CD4-positive, alpha-beta T cell (primary cell): ENCODE measurements at regions of chr2 and their contacts with region 1.

Region 1: GRCh38 chr2:86747711-86748639 is 27.9 kb downstream of the RMND5A start:
- DNase-seq: peak in 2 of 14 experiments; percentile 18 to 19
- ATAC-seq: no peak
- H3K4me3 ChIP-seq: no peak overlapping the region
- H3K4me3 Mint-ChIP-seq: no peak overlapping the region
- H3K27ac ChIP-seq: no peak overlapping the region
- H3K27ac Mint-ChIP-seq: no peak overlapping the region
- H3K4me1 ChIP-seq: peaks cover 3% of the 10 kb centered on the region
- H3K4me1 Mint-ChIP-seq: peaks cover 44% of the 10 kb centered on the region
- H3K27me3 ChIP-seq: no peaks in the 10 kb centered on the region
- H3K27me3 Mint-ChIP-seq: no peaks in the 10 kb centered on the region
- CTCF ChIP-seq: no peak

Region 2: GRCh38 chr2:86686905-86687304 is 61.1 kb before region 1 on chr2:
- CTCF ChIA-PET with region 1: no interaction called
- POLR2A ChIA-PET with region 1: no interaction called
- intact Hi-C with region 1: loop called in 1 of 2 experiments (anchors 5 kb)
- DNase-seq: no peak
- ATAC-seq: no peak
- H3K4me3 ChIP-seq: no peak overlapping the region
- H3K4me3 Mint-ChIP-seq: no peak overlapping the region
- H3K27ac ChIP-seq: no peak overlapping the region
- H3K27ac Mint-ChIP-seq: no peak overlapping the region
- H3K4me1 ChIP-seq: no peaks in the 10 kb centered on the region
- H3K4me1 Mint-ChIP-seq: no peaks in the 10 kb centered on the region
- H3K27me3 ChIP-seq: no peaks in the 10 kb centered on the region
- H3K27me3 Mint-ChIP-seq: peaks cover 3% of the 10 kb centered on the region
- CTCF ChIP-seq: no peak